ENCODE measurements at regions of chr11 and their contacts with region 1.

Region 1: GRCh38 chr11:129639300-129639699 is 176.3 kb upstream of the TMEM45B start:
- DNase-seq: peak; percentile 66
- H3K4me3 Mint-ChIP-seq: no peak overlapping the region
- H3K27ac Mint-ChIP-seq: peak overlapping the region; percentile 70
- H3K4me1 Mint-ChIP-seq: peaks cover 70% of the 10 kb centered on the region
- H3K27me3 Mint-ChIP-seq: no peaks in the 10 kb centered on the region

Region 2: GRCh38 chr11:129279326-129280026 is 359.8 kb before region 1 on chr11:
- CTCF ChIA-PET with region 1: no interaction called
- POLR2A ChIA-PET with region 1: no interaction called
- intact Hi-C with region 1: loop called (anchors 1 kb)
- DNase-seq: peak; percentile 67
- H3K4me3 Mint-ChIP-seq: peak overlapping the region; percentile 65
- H3K27ac Mint-ChIP-seq: peak overlapping the region; percentile 19
- H3K4me1 Mint-ChIP-seq: peaks cover 12% of the 10 kb centered on the region
- H3K27me3 Mint-ChIP-seq: peaks cover 25% of the 10 kb centered on the region

Region 3: DNA sequence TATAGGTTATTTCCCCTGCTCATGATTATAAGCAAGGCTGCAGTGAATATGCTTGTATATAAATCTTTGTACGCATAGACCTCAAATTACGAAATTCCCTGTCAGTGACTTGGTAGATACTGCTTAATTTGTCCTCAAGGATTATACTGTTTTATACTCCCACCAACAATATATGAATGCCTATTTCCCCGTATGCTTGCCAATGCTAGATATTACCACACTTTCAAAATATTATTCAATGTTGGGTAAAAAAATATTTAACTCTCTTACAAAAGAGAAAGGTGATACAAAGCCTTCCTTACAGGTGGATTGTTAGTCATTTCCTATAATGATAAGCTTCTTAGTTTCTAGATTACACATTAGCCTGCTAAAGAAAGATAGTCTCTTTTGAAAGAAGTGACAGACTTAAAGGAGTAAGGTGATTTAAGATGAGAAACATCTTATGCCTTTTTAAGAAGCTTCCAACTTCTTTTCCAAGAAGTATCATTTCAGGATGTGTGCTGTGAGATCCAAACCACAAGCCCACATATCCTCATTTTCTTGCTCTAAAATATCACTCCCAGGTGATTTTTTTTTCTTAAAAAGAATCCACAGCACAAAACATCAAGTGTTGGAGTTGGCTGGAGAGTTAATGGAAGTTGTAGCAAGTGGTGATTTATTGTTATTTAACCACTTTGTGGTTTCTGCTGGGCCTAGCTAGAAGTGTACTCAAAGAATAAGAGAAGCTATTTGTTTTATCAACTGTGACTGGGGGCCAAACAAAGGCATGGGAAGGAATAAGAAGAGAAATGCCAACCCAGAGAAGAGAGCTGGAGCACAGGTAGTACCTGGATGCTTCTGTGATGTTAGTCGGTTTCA is 204.4 kb before region 1 on chr11:
- CTCF ChIA-PET with region 1: no interaction called
- POLR2A ChIA-PET with region 1: no interaction called
- intact Hi-C with region 1: loop called (anchors 2 kb)
- DNase-seq: no peak
- H3K4me3 Mint-ChIP-seq: no peak overlapping the region
- H3K27ac Mint-ChIP-seq: no peak overlapping the region
- H3K4me1 Mint-ChIP-seq: peaks cover 9% of the 10 kb centered on the region
- H3K27me3 Mint-ChIP-seq: peaks cover 12% of the 10 kb centered on the region

Region 4: DNA sequence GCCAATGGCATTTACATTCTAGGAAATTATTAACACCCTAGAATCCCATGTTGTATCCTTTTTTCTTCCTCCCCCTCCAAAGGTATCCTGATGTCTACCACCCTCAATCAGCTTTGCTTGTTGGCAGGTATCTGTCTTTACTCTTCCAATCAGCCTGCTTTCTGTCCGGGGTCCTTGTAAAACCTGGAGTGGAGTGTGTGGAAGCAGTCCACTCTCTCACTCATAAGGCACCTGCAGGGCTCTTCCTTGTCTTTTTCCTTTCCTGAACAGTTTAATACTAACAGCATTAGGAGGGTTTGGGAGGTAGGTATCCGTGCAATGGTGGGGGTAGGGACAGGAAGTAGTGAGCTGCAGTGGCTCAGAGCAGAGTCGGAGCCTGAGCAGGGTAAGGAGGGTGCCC is 70.3 kb before region 1 on chr11:
- CTCF ChIA-PET with region 1: no interaction called
- POLR2A ChIA-PET with region 1: no interaction called
- intact Hi-C with region 1: no loop called
- DNase-seq: no peak
- H3K4me3 Mint-ChIP-seq: no peak overlapping the region
- H3K27ac Mint-ChIP-seq: no peak overlapping the region
- H3K4me1 Mint-ChIP-seq: no peaks in the 10 kb centered on the region
- H3K27me3 Mint-ChIP-seq: no peaks in the 10 kb centered on the region

Region 5: GRCh38 chr11:129695575-129696308 is 56.4 kb after region 1 on chr11:
- CTCF ChIA-PET with region 1: interaction called, 12 read pairs
- POLR2A ChIA-PET with region 1: no interaction called
- intact Hi-C with region 1: loop called (anchors 1 kb)
- DNase-seq: peak; percentile 80
- H3K4me3 Mint-ChIP-seq: peak overlapping the region; percentile 48
- H3K27ac Mint-ChIP-seq: no peak overlapping the region
- H3K4me1 Mint-ChIP-seq: peaks cover 10% of the 10 kb centered on the region
- H3K27me3 Mint-ChIP-seq: no peaks in the 10 kb centered on the region